GM12878 (cell line): ENCODE measurements at regions of chr7 and their contacts with region 1.

Region 1: GRCh38 chr7:20310963-20311742 is 19.5 kb upstream of the ITGB8 start:
- DNase-seq: peak; percentile 61
- ATAC-seq: peak; percentile 64
- H3K4me3 ChIP-seq: no peak overlapping the region
- H3K27ac ChIP-seq: no peak overlapping the region
- H3K4me1 ChIP-seq: peaks cover 4% of the 10 kb centered on the region; the same call in 1 of the 2 replicates
- H3K27me3 ChIP-seq: no peaks in the 10 kb centered on the region
- CTCF ChIP-seq: peak; percentile 16 to 62 (median 39); a peak in 4 of 6 replicates
- EP300 ChIP-seq: no peak
- POLR2A ChIP-seq: no peak
- RAD21 ChIP-seq: peak; percentile 79

Region 2: GRCh38 chr7:19754521-19755116 is 556.5 kb before region 1 on chr7:
- CTCF ChIA-PET with region 1: interaction called, 16 read pairs
- POLR2A ChIA-PET with region 1: no interaction called
- RAD21 ChIA-PET with region 1: interaction called, 9 read pairs
- SMC1A ChIA-PET with region 1: interaction called, 19 read pairs
- in situ Hi-C with region 1: loop called (anchors 10 kb)
- intact Hi-C with region 1: loop called (anchors 5 kb)
- DNase-seq: peak; percentile 15
- ATAC-seq: peak; percentile 63
- H3K4me3 ChIP-seq: no peak overlapping the region
- H3K27ac ChIP-seq: no peak overlapping the region
- H3K4me1 ChIP-seq: no peaks in the 10 kb centered on the region
- H3K27me3 ChIP-seq: no peaks in the 10 kb centered on the region
- CTCF ChIP-seq: peak; percentile 58 to 68 (median 64)
- EP300 ChIP-seq: no peak
- POLR2A ChIP-seq: no peak
- RAD21 ChIP-seq: peak; percentile 63

Region 3: GRCh38 chr7:19958309-19958896 is 352.8 kb before region 1 on chr7:
- CTCF ChIA-PET with region 1: no interaction called
- POLR2A ChIA-PET with region 1: no interaction called
- RAD21 ChIA-PET with region 1: no interaction called
- SMC1A ChIA-PET with region 1: no interaction called
- in situ Hi-C with region 1: no loop called
- intact Hi-C with region 1: no loop called
- DNase-seq: no peak
- ATAC-seq: no peak
- H3K4me3 ChIP-seq: no peak overlapping the region
- H3K27ac ChIP-seq: no peak overlapping the region
- H3K4me1 ChIP-seq: no peaks in the 10 kb centered on the region
- H3K27me3 ChIP-seq: no peaks in the 10 kb centered on the region
- CTCF ChIP-seq: no peak
- EP300 ChIP-seq: no peak
- POLR2A ChIP-seq: no peak
- RAD21 ChIP-seq: no peak

Region 4: GRCh38 chr7:20030915-20031362 is 280.2 kb before region 1 on chr7:
- CTCF ChIA-PET with region 1: no interaction called
- POLR2A ChIA-PET with region 1: no interaction called
- RAD21 ChIA-PET with region 1: no interaction called
- SMC1A ChIA-PET with region 1: no interaction called
- in situ Hi-C with region 1: no loop called
- intact Hi-C with region 1: no loop called
- DNase-seq: peak; percentile 50
- ATAC-seq: peak; percentile 74
- H3K4me3 ChIP-seq: peak overlapping the region; percentile 35; the same call in 1 of the 2 replicates
- H3K27ac ChIP-seq: peak overlapping the region; percentile 54
- H3K4me1 ChIP-seq: peaks cover 19% of the 10 kb centered on the region
- H3K27me3 ChIP-seq: no peaks in the 10 kb centered on the region
- CTCF ChIP-seq: no peak
- EP300 ChIP-seq: 0 out of 4 replicates have a peak, but pooled peaks of 1 of the 2 experiments have one; percentile 7
- POLR2A ChIP-seq: no peak
- RAD21 ChIP-seq: no peak

Region 5: DNA sequence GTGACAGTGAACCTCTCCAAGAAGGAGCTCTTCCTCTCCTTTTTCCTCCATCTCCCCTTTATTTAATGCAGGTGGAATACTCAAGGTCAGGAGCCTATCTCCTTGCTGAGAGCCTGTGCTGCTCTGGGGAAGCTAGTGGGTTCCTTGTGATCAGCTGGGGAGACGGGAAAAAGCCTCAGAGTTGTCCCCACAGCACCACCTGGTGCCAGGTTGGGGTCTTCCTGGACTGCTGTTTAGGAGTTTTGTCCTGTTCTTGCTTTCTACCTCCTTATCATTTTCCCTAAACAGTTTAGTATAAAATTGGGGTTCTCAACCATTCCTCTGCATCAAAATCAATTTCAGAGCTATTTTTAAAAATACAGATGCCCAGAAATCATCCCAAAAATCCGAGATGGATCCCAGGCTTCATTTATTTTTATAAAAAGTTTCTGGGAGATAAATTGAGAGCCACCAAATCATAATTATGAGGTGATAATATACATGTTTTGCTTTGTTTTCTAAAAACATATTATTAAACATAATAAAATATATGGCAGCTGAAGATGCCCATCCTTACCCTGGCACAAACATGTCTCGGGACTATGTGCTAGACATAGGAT is 138.3 kb before region 1 on chr7:
- CTCF ChIA-PET with region 1: interaction called, 32 read pairs
- POLR2A ChIA-PET with region 1: interaction called, 3 read pairs
- RAD21 ChIA-PET with region 1: interaction called, 34 read pairs
- SMC1A ChIA-PET with region 1: interaction called, 35 read pairs
- in situ Hi-C with region 1: no loop called
- intact Hi-C with region 1: no loop called
- DNase-seq: no peak
- ATAC-seq: peak; percentile 72
- H3K4me3 ChIP-seq: no peak overlapping the region
- H3K27ac ChIP-seq: no peak overlapping the region
- H3K4me1 ChIP-seq: no peaks in the 10 kb centered on the region
- H3K27me3 ChIP-seq: no peaks in the 10 kb centered on the region
- CTCF ChIP-seq: peak; percentile 47 to 51 (median 49); a peak in 5 of 6 replicates
- EP300 ChIP-seq: no peak
- POLR2A ChIP-seq: no peak
- RAD21 ChIP-seq: peak; percentile 70

Region 6: GRCh38 chr7:20183086-20183485 is 128.1 kb before region 1 on chr7:
- CTCF ChIA-PET with region 1: no interaction called
- POLR2A ChIA-PET with region 1: no interaction called
- RAD21 ChIA-PET with region 1: no interaction called
- SMC1A ChIA-PET with region 1: no interaction called
- in situ Hi-C with region 1: no loop called
- intact Hi-C with region 1: no loop called
- DNase-seq: no peak
- ATAC-seq: peak; percentile 36
- H3K4me3 ChIP-seq: no peak overlapping the region
- H3K27ac ChIP-seq: no peak overlapping the region
- H3K4me1 ChIP-seq: no peaks in the 10 kb centered on the region
- H3K27me3 ChIP-seq: no peaks in the 10 kb centered on the region
- CTCF ChIP-seq: no peak
- EP300 ChIP-seq: no peak
- POLR2A ChIP-seq: no peak
- RAD21 ChIP-seq: no peak

Region 7: GRCh38 chr7:20229646-20230500 is 81.3 kb before region 1 on chr7:
- CTCF ChIA-PET with region 1: interaction called, 4 read pairs
- POLR2A ChIA-PET with region 1: interaction called, 3 read pairs
- RAD21 ChIA-PET with region 1: interaction called, 4 read pairs
- SMC1A ChIA-PET with region 1: interaction called, 229 read pairs
- in situ Hi-C with region 1: no loop called
- intact Hi-C with region 1: no loop called
- DNase-seq: no peak
- ATAC-seq: no peak
- H3K4me3 ChIP-seq: no peak overlapping the region
- H3K27ac ChIP-seq: no peak overlapping the region
- H3K4me1 ChIP-seq: peaks cover 9% of the 10 kb centered on the region
- H3K27me3 ChIP-seq: no peaks in the 10 kb centered on the region
- CTCF ChIP-seq: no peak
- EP300 ChIP-seq: no peak
- POLR2A ChIP-seq: no peak
- RAD21 ChIP-seq: no peak

Region 8: GRCh38 chr7:20287317-20287716 is 23.8 kb before region 1 on chr7:
- CTCF ChIA-PET with region 1: interaction called, 16 read pairs
- POLR2A ChIA-PET with region 1: interaction called, 7 read pairs
- RAD21 ChIA-PET with region 1: interaction called, 33 read pairs
- SMC1A ChIA-PET with region 1: interaction called, 70 read pairs
- in situ Hi-C with region 1: no loop called
- intact Hi-C with region 1: no loop called
- DNase-seq: no peak
- ATAC-seq: peak; percentile 52
- H3K4me3 ChIP-seq: no peak overlapping the region
- H3K27ac ChIP-seq: no peak overlapping the region
- H3K4me1 ChIP-seq: peaks cover 19% of the 10 kb centered on the region
- H3K27me3 ChIP-seq: no peaks in the 10 kb centered on the region
- CTCF ChIP-seq: no peak
- EP300 ChIP-seq: peak; percentile 53 to 74; a peak in 3 of 4 replicates
- POLR2A ChIP-seq: no peak
- RAD21 ChIP-seq: no peak

Region 9: GRCh38 chr7:20338285-20338684 is 27.1 kb after region 1 on chr7:
- CTCF ChIA-PET with region 1: interaction called, 9 read pairs
- POLR2A ChIA-PET with region 1: no interaction called
- RAD21 ChIA-PET with region 1: interaction called, 8 read pairs
- SMC1A ChIA-PET with region 1: interaction called, 38 read pairs
- in situ Hi-C with region 1: no loop called
- intact Hi-C with region 1: no loop called
- DNase-seq: no peak
- ATAC-seq: no peak
- H3K4me3 ChIP-seq: no peak overlapping the region
- H3K27ac ChIP-seq: no peak overlapping the region
- H3K4me1 ChIP-seq: no peaks in the 10 kb centered on the region
- H3K27me3 ChIP-seq: no peaks in the 10 kb centered on the region; a peak in 1 of 4 replicates
- CTCF ChIP-seq: no peak
- EP300 ChIP-seq: no peak
- POLR2A ChIP-seq: no peak
- RAD21 ChIP-seq: no peak